ENCODE measurements at regions of chr1 and their contacts with region 1.

Region 1: GRCh38 chr1:218164111-218164929 is 120.8 kb upstream of the RRP15 start:
- DNase-seq: peak; percentile 93
- ATAC-seq: peak; percentile 69
- H3K4me3 ChIP-seq: peak overlapping the region; percentile 65
- H3K27ac ChIP-seq: peak overlapping the region; percentile 44
- H3K4me1 ChIP-seq: peaks cover 10% of the 10 kb centered on the region
- H3K27me3 ChIP-seq: peaks cover 83% of the 10 kb centered on the region
- CTCF ChIP-seq: peak; percentile 41

Region 2: DNA sequence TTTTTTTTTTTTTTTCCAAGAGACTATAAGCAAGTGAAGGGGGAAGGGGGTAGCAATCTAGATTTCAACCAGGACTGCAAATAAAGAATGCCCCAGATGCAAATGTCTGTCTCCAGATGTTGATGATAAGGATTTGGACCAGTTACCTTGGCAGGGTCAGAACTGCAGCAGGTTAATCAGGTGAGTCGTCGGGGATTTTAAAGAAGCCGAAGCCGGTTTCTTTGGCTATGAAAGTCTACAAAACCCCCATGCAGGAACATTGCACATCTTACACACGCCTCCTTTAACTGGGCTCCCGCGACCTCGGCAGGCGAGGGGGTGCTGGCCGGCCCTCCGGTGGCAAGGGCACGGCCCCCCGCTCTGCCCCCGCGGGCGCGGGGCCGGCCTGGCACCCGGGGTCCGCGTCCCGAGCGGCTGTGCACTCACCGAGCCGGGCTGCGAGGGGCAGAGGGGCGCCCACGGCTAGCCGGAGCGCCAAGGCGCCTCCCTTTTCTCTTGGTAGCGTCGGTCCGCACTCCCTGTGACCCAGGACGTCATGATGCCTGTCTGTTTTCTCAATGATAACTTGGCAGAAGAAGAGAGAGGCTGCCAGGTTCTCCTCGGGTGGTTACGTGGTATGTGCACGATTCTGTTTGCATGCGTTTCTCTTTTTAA is 1074.8 kb before region 1 on chr1:
- CTCF ChIA-PET with region 1: no interaction called
- POLR2A ChIA-PET with region 1: no interaction called
- intact Hi-C with region 1: loop called (anchors 10 kb)
- DNase-seq: peak; percentile 82
- ATAC-seq: peak; percentile 90
- H3K4me3 ChIP-seq: peak overlapping the region; percentile 84
- H3K27ac ChIP-seq: peak overlapping the region; percentile 54
- H3K4me1 ChIP-seq: peaks cover 17% of the 10 kb centered on the region
- H3K27me3 ChIP-seq: no peaks in the 10 kb centered on the region
- CTCF ChIP-seq: no peak

Region 3: GRCh38 chr1:217562229-217562878 is 602.0 kb before region 1 on chr1:
- CTCF ChIA-PET with region 1: no interaction called
- POLR2A ChIA-PET with region 1: no interaction called
- intact Hi-C with region 1: loop called (anchors 10 kb)
- DNase-seq: peak; percentile 97
- ATAC-seq: peak; percentile 97
- H3K4me3 ChIP-seq: peak overlapping the region; percentile 52
- H3K27ac ChIP-seq: peak overlapping the region; percentile 71
- H3K4me1 ChIP-seq: peaks cover 28% of the 10 kb centered on the region
- H3K27me3 ChIP-seq: no peaks in the 10 kb centered on the region
- CTCF ChIP-seq: no peak

Region 4: GRCh38 chr1:217919683-217920388 is 244.5 kb before region 1 on chr1:
- CTCF ChIA-PET with region 1: no interaction called
- POLR2A ChIA-PET with region 1: no interaction called
- intact Hi-C with region 1: loop called (anchors 2 kb)
- DNase-seq: no peak
- ATAC-seq: no peak
- H3K4me3 ChIP-seq: no peak overlapping the region
- H3K27ac ChIP-seq: no peak overlapping the region
- H3K4me1 ChIP-seq: peaks cover 11% of the 10 kb centered on the region
- H3K27me3 ChIP-seq: no peaks in the 10 kb centered on the region
- CTCF ChIP-seq: no peak

Region 5: GRCh38 chr1:218025454-218025853 is 138.9 kb before region 1 on chr1:
- CTCF ChIA-PET with region 1: no interaction called
- POLR2A ChIA-PET with region 1: no interaction called
- intact Hi-C with region 1: loop called (anchors 1 kb)
- DNase-seq: peak; percentile 99
- ATAC-seq: peak; percentile 97
- H3K4me3 ChIP-seq: no peak overlapping the region
- H3K27ac ChIP-seq: peak overlapping the region; percentile 52
- H3K4me1 ChIP-seq: peaks cover 32% of the 10 kb centered on the region
- H3K27me3 ChIP-seq: no peaks in the 10 kb centered on the region
- CTCF ChIP-seq: no peak; the same call in 1 of the 2 replicates

Region 6: GRCh38 chr1:218058730-218059129 is 105.6 kb before region 1 on chr1:
- CTCF ChIA-PET with region 1: no interaction called
- POLR2A ChIA-PET with region 1: no interaction called
- intact Hi-C with region 1: loop called (anchors 5 kb)
- DNase-seq: peak; percentile 97
- ATAC-seq: peak; percentile 96
- H3K4me3 ChIP-seq: no peak overlapping the region
- H3K27ac ChIP-seq: peak overlapping the region; percentile 6
- H3K4me1 ChIP-seq: peaks cover 9% of the 10 kb centered on the region
- H3K27me3 ChIP-seq: no peaks in the 10 kb centered on the region
- CTCF ChIP-seq: no peak

Region 7: DNA sequence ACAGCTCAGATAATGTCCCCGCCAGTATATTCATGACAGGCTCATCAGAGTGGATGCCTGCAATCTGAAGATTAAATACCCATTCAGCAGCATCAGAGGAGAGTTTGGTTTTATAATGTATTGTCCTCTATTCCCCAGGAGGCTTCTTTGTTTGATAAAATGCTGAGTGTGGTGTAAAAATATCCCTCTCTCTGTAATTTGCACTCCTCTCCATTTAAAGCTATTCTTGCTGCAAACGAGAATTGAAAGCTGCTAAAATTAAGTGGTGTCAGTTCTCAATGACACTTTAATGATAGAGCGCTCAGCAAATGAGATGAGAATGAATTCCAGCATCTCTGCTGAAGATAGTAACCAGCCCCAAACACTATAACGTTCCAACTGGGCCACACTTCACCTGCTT is 85.0 kb before region 1 on chr1:
- CTCF ChIA-PET with region 1: no interaction called
- POLR2A ChIA-PET with region 1: no interaction called
- intact Hi-C with region 1: no loop called
- DNase-seq: no peak
- ATAC-seq: peak; percentile 14
- H3K4me3 ChIP-seq: no peak overlapping the region
- H3K27ac ChIP-seq: peak overlapping the region; percentile 15; the same call in 1 of the 2 replicates
- H3K4me1 ChIP-seq: peaks cover 14% of the 10 kb centered on the region
- H3K27me3 ChIP-seq: no peaks in the 10 kb centered on the region
- CTCF ChIP-seq: no peak

Region 8: GRCh38 chr1:218284934-218285635 is 120.8 kb after region 1 on chr1 and contains the start of gene RRP15:
- CTCF ChIA-PET with region 1: no interaction called
- POLR2A ChIA-PET with region 1: no interaction called
- intact Hi-C with region 1: loop called (anchors 2 kb)
- DNase-seq: peak; percentile 99
- ATAC-seq: peak; percentile 94
- H3K4me3 ChIP-seq: peak within 1 kb of the TSS; percentile 88
- H3K27ac ChIP-seq: peak within 1 kb of the TSS; percentile 45
- H3K4me1 ChIP-seq: peaks cover 23% of the 10 kb centered on the region
- H3K27me3 ChIP-seq: no peaks in the 10 kb centered on the region
- CTCF ChIP-seq: no peak
- total RNA-seq, gene RRP15: 25.6 and 39.3 TPM in 2 replicates

Region 9: DNA sequence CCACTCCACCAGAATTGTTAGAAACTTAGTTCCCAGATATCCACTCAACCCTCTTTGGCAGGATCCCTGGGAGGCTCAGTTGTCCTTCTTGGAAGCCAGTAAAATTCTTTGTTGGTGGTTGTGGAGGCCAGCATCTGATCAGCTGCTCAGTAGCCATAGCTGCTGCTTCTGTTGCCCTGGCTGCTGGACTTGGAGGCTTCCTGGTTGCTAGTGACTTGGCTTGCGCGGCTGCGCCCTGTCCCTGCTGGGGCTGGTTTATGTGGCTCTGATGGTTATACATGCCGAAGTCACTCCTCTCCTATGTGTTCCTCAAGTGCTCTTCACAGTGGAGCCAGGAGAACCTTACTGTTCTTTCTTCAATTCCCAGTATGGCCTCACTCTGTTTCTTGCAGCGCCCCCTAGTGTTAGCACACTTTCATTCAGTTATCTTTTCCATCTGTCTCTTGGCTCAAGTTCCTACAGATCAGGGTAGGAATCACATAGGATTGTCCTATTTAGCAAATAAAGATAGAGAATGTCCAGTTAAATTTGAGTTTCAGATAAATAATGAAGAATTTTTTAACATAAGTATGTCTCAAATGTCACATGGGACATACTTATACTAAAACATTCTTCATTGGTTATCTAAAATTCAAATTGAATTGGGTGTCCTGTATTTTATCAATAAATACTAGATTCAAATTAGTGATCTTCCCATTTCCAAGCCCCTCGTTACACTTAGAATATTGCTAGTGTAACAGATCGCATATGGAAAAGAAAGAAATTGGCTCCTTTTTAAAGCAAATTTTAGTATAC is 357.3 kb after region 1 on chr1:
- CTCF ChIA-PET with region 1: no interaction called
- POLR2A ChIA-PET with region 1: no interaction called
- intact Hi-C with region 1: no loop called
- DNase-seq: peak; percentile 88
- ATAC-seq: peak; percentile 65; the same call in 1 of the 2 replicates
- H3K4me3 ChIP-seq: no peak overlapping the region
- H3K27ac ChIP-seq: no peak overlapping the region
- H3K4me1 ChIP-seq: no peaks in the 10 kb centered on the region
- H3K27me3 ChIP-seq: no peaks in the 10 kb centered on the region
- CTCF ChIP-seq: peak; percentile 99

Measured in PC-3 (cell line).